ENCODE measurements at regions of chr10 and their contacts with region 1.

Region 1: GRCh38 chr10:88932539-88933256 is 19.9 kb downstream of the ACTA2 start:
- DNase-seq: peak in 7 of 9 donors; percentile 16 to 63 (median 45)
- ATAC-seq: peak; percentile 78
- H3K4me3 ChIP-seq: no peak overlapping the region
- H3K4me3 Mint-ChIP-seq: no peak overlapping the region
- H3K27ac ChIP-seq: no peak overlapping the region
- H3K27ac Mint-ChIP-seq: peak overlapping the region in 5 of 9 donors; percentile 15 to 70 (median 48)
- H3K4me1 ChIP-seq: peaks cover 5 to 10% of the 10 kb centered on the region in 2 donors
- H3K4me1 Mint-ChIP-seq: peaks cover 5 to 28% (median 18%) of the 10 kb centered on the region in 7 donors
- H3K27me3 ChIP-seq: no peaks in the 10 kb centered on the region
- H3K27me3 Mint-ChIP-seq: no peaks in the 10 kb centered on the region

Region 2: GRCh38 chr10:88409236-88409635 is 523.5 kb before region 1 on chr10:
- CTCF ChIA-PET with region 1: no interaction called
- POLR2A ChIA-PET with region 1: no interaction called
- intact Hi-C with region 1: no loop called
- DNase-seq: no peak
- ATAC-seq: no peak
- H3K4me3 ChIP-seq: no peak overlapping the region
- H3K4me3 Mint-ChIP-seq: no peak overlapping the region
- H3K27ac ChIP-seq: no peak overlapping the region
- H3K27ac Mint-ChIP-seq: no peak overlapping the region
- H3K4me1 ChIP-seq: no peaks in the 10 kb centered on the region
- H3K4me1 Mint-ChIP-seq: peaks cover 0 to 1% (median 0%) of the 10 kb centered on the region in 7 donors
- H3K27me3 ChIP-seq: no peaks in the 10 kb centered on the region
- H3K27me3 Mint-ChIP-seq: no peaks in the 10 kb centered on the region

Region 3: DNA sequence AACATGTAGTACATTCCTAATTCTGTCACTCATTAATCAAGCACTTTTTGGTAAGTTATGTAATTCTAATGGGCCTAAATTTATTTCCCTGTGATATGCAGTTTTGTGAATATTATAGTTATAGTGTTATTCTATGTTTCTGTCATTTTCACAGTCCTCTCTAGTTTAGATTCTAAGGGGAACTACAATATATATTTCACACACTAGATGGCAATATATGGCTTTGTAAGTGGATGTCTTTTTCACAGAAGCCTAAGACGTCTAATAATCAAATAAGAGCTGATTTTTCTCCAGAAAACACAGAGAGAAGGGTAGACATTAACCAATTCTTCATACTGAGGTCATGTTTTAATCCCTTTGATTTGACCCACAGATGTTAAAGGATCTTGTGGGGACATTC is 367.6 kb before region 1 on chr10:
- CTCF ChIA-PET with region 1: interaction called, 8 read pairs
- POLR2A ChIA-PET with region 1: no interaction called
- intact Hi-C with region 1: loop called (anchors 1 kb)
- DNase-seq: peak in 4 of 9 donors; percentile 5 to 29 (median 12)
- ATAC-seq: peak; percentile 54
- H3K4me3 ChIP-seq: no peak overlapping the region
- H3K4me3 Mint-ChIP-seq: no peak overlapping the region
- H3K27ac ChIP-seq: no peak overlapping the region
- H3K27ac Mint-ChIP-seq: no peak overlapping the region
- H3K4me1 ChIP-seq: no peaks in the 10 kb centered on the region
- H3K4me1 Mint-ChIP-seq: peaks cover 0 to 4% (median under 1%) of the 10 kb centered on the region in 7 donors
- H3K27me3 ChIP-seq: no peaks in the 10 kb centered on the region
- H3K27me3 Mint-ChIP-seq: peaks cover 0 to 23% (median 0%) of the 10 kb centered on the region in 5 donors

Region 4: GRCh38 chr10:88820748-88821389 is 111.8 kb before region 1 on chr10:
- CTCF ChIA-PET with region 1: interaction called, 15 read pairs
- POLR2A ChIA-PET with region 1: no interaction called
- intact Hi-C with region 1: no loop called
- DNase-seq: peak in 1 of 9 donors; percentile 13
- ATAC-seq: no peak
- H3K4me3 ChIP-seq: no peak overlapping the region
- H3K4me3 Mint-ChIP-seq: peak overlapping the region in 2 of 10 donors; percentile 13 to 16
- H3K27ac ChIP-seq: no peak overlapping the region
- H3K27ac Mint-ChIP-seq: peak overlapping the region in 4 of 9 donors; percentile 19 to 86 (median 44)
- H3K4me1 ChIP-seq: peaks cover 24 to 34% of the 10 kb centered on the region in 2 donors
- H3K4me1 Mint-ChIP-seq: peaks cover 20 to 66% (median 51%) of the 10 kb centered on the region in 7 donors
- H3K27me3 ChIP-seq: no peaks in the 10 kb centered on the region
- H3K27me3 Mint-ChIP-seq: peaks cover 0 to 4% (median 0%) of the 10 kb centered on the region in 5 donors

Region 5: DNA sequence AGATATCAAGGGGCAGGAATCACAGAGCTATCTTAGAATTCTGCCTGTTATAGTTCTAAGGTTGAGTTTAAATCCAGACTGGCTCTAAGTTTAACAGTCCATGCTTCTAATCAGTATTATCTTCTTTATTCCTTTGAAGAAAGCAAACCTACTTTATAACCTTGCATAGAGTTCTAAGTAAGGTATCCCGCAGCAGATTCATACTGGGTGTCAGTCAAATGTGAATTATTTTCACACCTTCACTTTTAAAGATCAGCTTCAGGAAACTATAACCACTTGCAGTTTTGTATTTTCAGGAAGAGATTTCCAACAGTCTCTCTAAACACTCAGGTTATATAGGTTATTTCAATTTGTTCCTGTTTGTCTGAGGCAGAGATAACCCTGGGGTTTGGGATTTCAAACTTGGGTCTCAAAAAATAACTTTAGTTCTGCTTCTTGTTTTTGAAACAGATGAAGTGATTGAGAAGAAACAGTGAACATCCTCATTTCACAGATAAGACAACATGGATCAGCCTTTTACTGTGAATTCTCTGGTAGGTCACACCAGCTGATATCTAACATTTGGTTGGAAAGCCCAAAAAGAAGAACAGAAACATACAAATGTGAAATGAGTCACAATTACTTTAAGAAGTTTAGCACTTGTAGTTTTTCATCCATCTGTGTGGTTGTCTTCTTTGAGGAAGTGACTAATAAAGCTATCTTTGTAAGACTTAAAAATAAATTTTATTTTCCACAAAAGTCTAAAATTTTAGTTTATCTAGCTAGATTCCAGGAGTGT is 31.3 kb before region 1 on chr10:
- CTCF ChIA-PET with region 1: interaction called, 28 read pairs
- POLR2A ChIA-PET with region 1: no interaction called
- intact Hi-C with region 1: no loop called
- DNase-seq: no peak
- ATAC-seq: peak; percentile 84
- H3K4me3 ChIP-seq: no peak overlapping the region
- H3K4me3 Mint-ChIP-seq: peak overlapping the region in 1 of 10 donors; percentile 34
- H3K27ac ChIP-seq: no peak overlapping the region
- H3K27ac Mint-ChIP-seq: peak overlapping the region in 4 of 9 donors; percentile 43 to 60 (median 53)
- H3K4me1 ChIP-seq: peaks cover 15 to 24% of the 10 kb centered on the region in 2 donors
- H3K4me1 Mint-ChIP-seq: peaks cover 23 to 58% (median 40%) of the 10 kb centered on the region in 7 donors
- H3K27me3 ChIP-seq: no peaks in the 10 kb centered on the region
- H3K27me3 Mint-ChIP-seq: no peaks in the 10 kb centered on the region

Region 6: DNA sequence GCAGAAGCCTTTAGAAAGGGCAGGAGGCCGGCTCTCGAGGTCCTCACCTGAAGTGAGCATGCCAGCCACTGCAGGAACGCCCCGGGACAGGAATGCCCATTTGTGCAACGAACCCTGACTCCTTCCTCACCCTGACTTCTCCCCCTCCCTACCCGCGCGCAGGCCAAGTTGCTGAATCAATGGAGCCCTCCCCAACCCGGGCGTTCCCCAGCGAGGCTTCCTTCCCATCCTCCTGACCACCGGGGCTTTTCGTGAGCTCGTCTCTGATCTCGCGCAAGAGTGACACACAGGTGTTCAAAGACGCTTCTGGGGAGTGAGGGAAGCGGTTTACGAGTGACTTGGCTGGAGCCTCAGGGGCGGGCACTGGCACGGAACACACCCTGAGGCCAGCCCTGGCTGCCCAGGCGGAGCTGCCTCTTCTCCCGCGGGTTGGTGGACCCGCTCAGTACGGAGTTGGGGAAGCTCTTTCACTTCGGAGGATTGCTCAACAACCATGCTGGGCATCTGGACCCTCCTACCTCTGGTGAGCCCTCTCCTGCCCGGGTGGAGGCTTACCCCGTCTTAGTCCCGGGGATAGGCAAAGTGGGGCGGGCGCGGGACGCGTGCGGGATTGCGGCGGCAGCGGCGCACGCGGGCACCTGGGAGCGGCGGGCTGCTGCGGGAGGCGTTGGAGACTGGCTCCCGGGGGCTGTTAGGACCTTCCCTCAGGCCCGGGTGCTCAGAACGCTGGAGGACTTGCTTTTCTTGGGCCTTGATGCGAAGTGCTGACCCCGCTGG is 57.9 kb after region 1 on chr10 and contains the start of gene FAS:
- CTCF ChIA-PET with region 1: interaction called, 12 read pairs
- POLR2A ChIA-PET with region 1: interaction called, 3 read pairs
- intact Hi-C with region 1: loop called (anchors 1 kb)
- DNase-seq: peak; percentile 50 to 81 (median 61)
- ATAC-seq: peak; percentile 86
- H3K4me3 ChIP-seq: peak within 1 kb of the TSS; percentile 86
- H3K4me3 Mint-ChIP-seq: peak within 1 kb of the TSS; percentile 92 to 100 (median 96)
- H3K27ac ChIP-seq: peak within 1 kb of the TSS; percentile 77
- H3K27ac Mint-ChIP-seq: peak within 1 kb of the TSS; percentile 91 to 96 (median 94)
- H3K4me1 ChIP-seq: peaks cover 42 to 45% of the 10 kb centered on the region in 2 donors
- H3K4me1 Mint-ChIP-seq: peaks cover 41 to 83% (median 68%) of the 10 kb centered on the region in 7 donors
- H3K27me3 ChIP-seq: no peaks in the 10 kb centered on the region
- H3K27me3 Mint-ChIP-seq: no peaks in the 10 kb centered on the region
- total RNA-seq, gene FAS: 5.6 to 67.4 (median 8.3) TPM

Region 7: DNA sequence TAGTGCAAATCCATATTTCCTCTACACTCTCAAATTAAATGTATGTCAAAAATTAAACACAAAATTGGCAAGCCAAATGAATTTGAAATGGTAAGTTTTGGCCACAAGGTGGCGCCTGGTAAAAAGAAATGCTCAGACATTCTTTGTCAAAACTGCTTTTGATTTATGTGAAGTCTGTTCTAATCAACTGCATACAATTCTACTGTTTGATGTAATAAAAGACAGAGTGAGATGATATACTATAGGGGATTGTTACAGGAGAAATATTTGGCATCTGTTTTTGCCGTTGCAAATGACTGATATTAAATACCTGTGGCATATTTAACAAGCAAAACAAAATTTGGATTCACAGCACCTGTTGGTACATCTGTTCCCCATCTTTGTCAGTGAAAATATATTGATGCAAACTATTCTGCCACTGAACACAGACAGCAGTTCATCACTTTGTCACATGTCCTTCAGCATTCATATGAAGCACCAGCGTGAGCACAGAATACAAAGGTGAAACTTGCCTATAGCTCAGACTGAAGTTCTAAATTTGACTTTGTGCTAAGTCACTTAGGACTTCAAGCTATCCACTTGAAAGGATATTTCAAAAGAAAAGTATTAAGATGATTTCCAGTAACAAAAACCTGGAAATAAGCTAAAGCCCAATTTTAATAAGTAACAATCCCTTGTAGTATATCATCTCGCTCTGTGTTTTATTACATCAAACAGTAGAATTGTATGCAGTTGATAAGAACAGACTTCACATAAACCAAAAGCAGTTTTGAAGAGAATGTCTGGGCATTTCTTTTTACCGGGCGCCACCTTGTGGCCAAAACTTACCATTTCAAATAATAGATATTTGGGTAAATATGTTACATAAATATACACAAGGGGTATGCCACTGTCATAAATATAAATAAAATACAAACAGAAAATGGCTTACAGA is 284.6 kb after region 1 on chr10:
- CTCF ChIA-PET with region 1: interaction called, 73 read pairs
- POLR2A ChIA-PET with region 1: no interaction called
- intact Hi-C with region 1: loop called (anchors 1 kb)
- DNase-seq: peak; percentile 17 to 66 (median 56)
- ATAC-seq: peak; percentile 75
- H3K4me3 ChIP-seq: no peak overlapping the region
- H3K4me3 Mint-ChIP-seq: peak overlapping the region in 5 of 10 donors; percentile 0 to 69 (median 3)
- H3K27ac ChIP-seq: no peak overlapping the region
- H3K27ac Mint-ChIP-seq: peak overlapping the region in 7 of 9 donors; percentile 2 to 79 (median 25)
- H3K4me1 ChIP-seq: peaks cover 0 to 6% of the 10 kb centered on the region in 2 donors
- H3K4me1 Mint-ChIP-seq: peaks cover 8 to 15% (median 10%) of the 10 kb centered on the region in 7 donors
- H3K27me3 ChIP-seq: no peaks in the 10 kb centered on the region
- H3K27me3 Mint-ChIP-seq: peaks cover 0 to 3% (median 0%) of the 10 kb centered on the region in 5 donors

Region 8: GRCh38 chr10:89262086-89263051 is 329.7 kb after region 1 on chr10:
- CTCF ChIA-PET with region 1: no interaction called
- POLR2A ChIA-PET with region 1: no interaction called
- intact Hi-C with region 1: no loop called
- DNase-seq: no peak
- ATAC-seq: no peak
- H3K4me3 ChIP-seq: no peak overlapping the region
- H3K4me3 Mint-ChIP-seq: no peak overlapping the region
- H3K27ac ChIP-seq: no peak overlapping the region
- H3K27ac Mint-ChIP-seq: no peak overlapping the region
- H3K4me1 ChIP-seq: no peaks in the 10 kb centered on the region
- H3K4me1 Mint-ChIP-seq: peaks cover 0 to 6% (median 3%) of the 10 kb centered on the region in 7 donors
- H3K27me3 ChIP-seq: no peaks in the 10 kb centered on the region
- H3K27me3 Mint-ChIP-seq: peaks cover 0 to 27% (median 0%) of the 10 kb centered on the region in 5 donors

Region 9: DNA sequence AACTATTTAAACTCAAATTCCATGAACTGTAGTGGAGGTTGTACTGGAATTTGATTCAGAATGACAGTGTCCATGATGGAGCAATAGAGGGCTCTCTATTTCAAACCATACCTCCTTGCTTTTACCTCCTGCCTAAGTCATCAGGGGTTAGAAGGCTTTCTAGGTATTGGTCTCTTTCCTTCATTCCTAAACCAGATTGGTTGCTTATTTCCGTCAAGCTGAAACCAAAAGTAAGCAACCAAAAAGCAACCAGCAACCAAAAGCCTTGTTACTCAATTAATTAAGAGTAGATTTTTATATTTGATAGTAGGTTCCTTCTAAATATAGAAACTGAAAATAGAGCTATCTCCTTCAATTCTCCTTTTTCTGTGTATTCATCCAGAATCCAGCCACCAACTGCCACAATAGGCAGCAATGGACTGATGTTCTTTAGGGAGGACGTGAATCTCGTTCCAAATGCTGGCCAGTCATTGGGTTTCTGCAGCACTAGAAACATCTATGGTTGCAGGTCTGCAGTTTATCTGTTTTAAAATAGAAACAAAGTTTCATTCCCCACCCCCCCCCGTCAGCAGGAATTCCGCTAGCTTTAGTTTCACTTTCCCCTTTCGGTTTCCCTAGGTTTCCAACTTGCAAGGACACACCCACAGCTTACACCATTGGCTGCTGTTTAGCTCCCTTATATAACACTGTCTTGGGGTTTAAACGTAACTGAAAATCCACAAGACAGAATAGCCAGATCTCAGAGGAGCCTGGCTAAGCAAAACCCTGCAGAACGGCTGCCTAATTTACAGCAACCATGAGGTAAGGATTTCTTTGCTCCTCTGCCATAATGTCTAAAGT is 459.4 kb after region 1 on chr10 and contains the start of gene IFIT1:
- CTCF ChIA-PET with region 1: no interaction called
- POLR2A ChIA-PET with region 1: no interaction called
- intact Hi-C with region 1: no loop called
- DNase-seq: peak in 8 of 9 donors; percentile 36 to 84 (median 72)
- ATAC-seq: peak; percentile 96
- H3K4me3 ChIP-seq: peak within 1 kb of the TSS; percentile 82
- H3K4me3 Mint-ChIP-seq: peak within 1 kb of the TSS; percentile 85 to 96 (median 90)
- H3K27ac ChIP-seq: peak within 1 kb of the TSS; percentile 72
- H3K27ac Mint-ChIP-seq: peak within 1 kb of the TSS; percentile 87 to 97 (median 93)
- H3K4me1 ChIP-seq: peaks cover 14 to 19% of the 10 kb centered on the region in 2 donors
- H3K4me1 Mint-ChIP-seq: peaks cover 14 to 53% (median 45%) of the 10 kb centered on the region in 7 donors
- H3K27me3 ChIP-seq: no peaks in the 10 kb centered on the region
- H3K27me3 Mint-ChIP-seq: peaks cover 0 to 6% (median 0%) of the 10 kb centered on the region in 5 donors
- total RNA-seq, gene IFIT1: 1.7 to 15.7 (median 6.5) TPM